Activated CD8-positive, alpha-beta memory T cell treated with anti-CD3 and anti-CD28 coated beads, Interleukin-2, amount 10 ng/mL, durations not matched to agents 7 days and 5 days (primary cell): ENCODE measurements at regions of chr17 and their contacts with region 1.

Region 1: GRCh38 chr17:64964796-64965195 is 45.5 kb upstream of the LRRC37A3 start:
- DNase-seq: no peak
- ATAC-seq: no peak
- H3K4me3 Mint-ChIP-seq: no peak overlapping the region
- H3K27ac Mint-ChIP-seq: no peak overlapping the region
- H3K4me1 Mint-ChIP-seq: peaks cover 62% of the 10 kb centered on the region
- H3K27me3 Mint-ChIP-seq: no peaks in the 10 kb centered on the region

Region 2: GRCh38 chr17:64940055-64940454 is 24.7 kb before region 1 on chr17:
- CTCF ChIA-PET with region 1: interaction called, 29 read pairs
- DNase-seq: no peak
- ATAC-seq: no peak
- H3K4me3 Mint-ChIP-seq: no peak overlapping the region
- H3K27ac Mint-ChIP-seq: no peak overlapping the region
- H3K4me1 Mint-ChIP-seq: peaks cover 20% of the 10 kb centered on the region
- H3K27me3 Mint-ChIP-seq: peaks cover 9% of the 10 kb centered on the region